ENCODE measurements at regions of chrX and their contacts with region 1.

Region 1: DNA sequence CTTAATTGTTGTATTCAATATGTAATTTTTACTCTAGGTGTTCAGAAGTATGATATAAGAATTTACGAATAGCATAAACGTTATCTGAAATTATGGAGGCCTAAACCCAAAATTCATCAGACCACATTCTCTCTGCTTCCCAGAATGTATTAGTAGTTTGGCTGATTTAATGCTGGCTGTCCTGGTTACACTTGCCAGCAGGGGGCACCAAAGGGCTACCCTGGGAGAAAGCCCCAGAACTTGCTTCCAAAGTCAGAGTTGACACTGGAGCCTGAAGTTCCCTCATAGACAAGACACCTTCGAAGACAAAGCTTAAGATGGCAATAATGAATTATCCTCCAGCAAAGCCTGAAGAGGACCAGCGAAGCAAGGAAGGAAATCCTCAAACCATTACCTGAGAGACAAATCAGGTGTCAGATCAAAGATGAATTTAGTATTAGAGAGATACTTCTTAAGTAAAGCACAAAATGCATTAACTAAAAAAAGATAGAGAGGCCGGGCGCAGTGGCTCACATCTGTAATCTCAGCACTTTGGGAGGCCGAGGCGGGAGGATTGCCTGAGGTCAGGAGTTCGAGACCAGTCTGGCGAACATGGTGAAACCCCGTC is 11.3 kb upstream of the ANOS1 start:
- DNase-seq: peak in 2 of 3 donors; percentile 65 to 76
- ATAC-seq: peak; percentile 69
- H3K4me3 ChIP-seq: no peak overlapping the region
- H3K4me1 ChIP-seq: no peaks in the 10 kb centered on the region
- CTCF ChIP-seq: no peak

Region 2: DNA sequence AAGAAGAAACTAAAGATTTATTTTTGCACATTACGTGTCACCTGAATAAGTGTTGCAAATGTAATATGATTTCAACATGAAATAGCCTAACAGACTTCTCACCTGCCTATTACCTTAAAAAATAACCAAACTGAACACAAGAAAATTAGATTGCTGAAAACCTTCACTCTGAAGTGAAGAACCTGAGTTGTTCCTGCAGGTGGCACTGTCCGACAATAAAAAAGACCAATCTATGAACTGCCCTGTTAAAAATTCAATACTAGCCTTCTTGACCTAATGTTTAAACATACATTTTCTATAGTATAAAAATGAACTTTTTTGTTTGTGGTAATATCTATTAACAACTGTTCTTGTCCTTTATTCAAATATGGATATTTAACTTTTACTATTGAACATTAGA is 746.8 kb before region 1 on chrX:
- intact Hi-C with region 1: loop called (anchors 10 kb)
- DNase-seq: peak in 1 of 3 donors; percentile 38
- ATAC-seq: peak; percentile 43
- H3K4me3 ChIP-seq: no peak overlapping the region
- H3K4me1 ChIP-seq: no peaks in the 10 kb centered on the region
- CTCF ChIP-seq: no peak

Region 3: GRCh38 chrX:8815464-8816065 is 72.3 kb after region 1 on chrX:
- intact Hi-C with region 1: loop called in 1 of 2 experiments (anchors 2 kb)
- DNase-seq: peak in 1 of 3 donors; percentile 63
- ATAC-seq: peak; percentile 52
- H3K4me3 ChIP-seq: no peak overlapping the region
- H3K4me1 ChIP-seq: no peaks in the 10 kb centered on the region
- CTCF ChIP-seq: peak; percentile 33

Measured in mucosa of descending colon (tissue), 3 donors.